CD8-positive, alpha-beta memory T cell (primary cell): ENCODE measurements at regions of chr3 and their contacts with region 1.

Region 1: GRCh38 chr3:149657926-149658733 is at the start of gene WWTR1:
- DNase-seq: peak in 4 of 5 donors; percentile 5 to 60 (median 10)
- H3K4me3 ChIP-seq: peak within 1 kb of the TSS; percentile 49
- H3K4me3 Mint-ChIP-seq: peak within 1 kb of the TSS; percentile 84 to 95 (median 87)
- H3K27ac ChIP-seq: no peak within 1 kb of the TSS
- H3K27ac Mint-ChIP-seq: peak within 1 kb of the TSS in 7 of 8 donors; percentile 36 to 95 (median 69)
- H3K4me1 ChIP-seq: no peaks in the 10 kb centered on the region
- H3K4me1 Mint-ChIP-seq: peaks cover 10 to 35% (median 29%) of the 10 kb centered on the region in 3 donors
- H3K27me3 ChIP-seq: peaks cover 10% of the 10 kb centered on the region
- H3K27me3 Mint-ChIP-seq: peaks cover 45 to 47% of the 10 kb centered on the region in 2 donors
- total RNA-seq, gene WWTR1: 0.98 to 1.9 TPM

Region 2: GRCh38 chr3:149571381-149571780 is 86.7 kb before region 1 on chr3:
- CTCF ChIA-PET with region 1: interaction called, 19 read pairs
- POLR2A ChIA-PET with region 1: no interaction called
- DNase-seq: no peak
- H3K4me3 ChIP-seq: no peak overlapping the region
- H3K4me3 Mint-ChIP-seq: no peak overlapping the region
- H3K27ac ChIP-seq: no peak overlapping the region
- H3K27ac Mint-ChIP-seq: no peak overlapping the region
- H3K4me1 ChIP-seq: no peaks in the 10 kb centered on the region
- H3K4me1 Mint-ChIP-seq: peaks cover 3 to 27% (median 14%) of the 10 kb centered on the region in 3 donors
- H3K27me3 ChIP-seq: no peaks in the 10 kb centered on the region
- H3K27me3 Mint-ChIP-seq: peaks cover 0 to 3% of the 10 kb centered on the region in 2 donors

Region 3: GRCh38 chr3:149670742-149671492 is 12.8 kb after region 1 on chr3:
- CTCF ChIA-PET with region 1: interaction called, 15 read pairs
- POLR2A ChIA-PET with region 1: no interaction called
- DNase-seq: no peak
- H3K4me3 ChIP-seq: no peak overlapping the region
- H3K4me3 Mint-ChIP-seq: peak overlapping the region in 1 of 7 donors; percentile 28
- H3K27ac ChIP-seq: no peak overlapping the region
- H3K27ac Mint-ChIP-seq: no peak overlapping the region
- H3K4me1 ChIP-seq: no peaks in the 10 kb centered on the region
- H3K4me1 Mint-ChIP-seq: peaks cover 0 to 6% (median 4%) of the 10 kb centered on the region in 3 donors
- H3K27me3 ChIP-seq: no peaks in the 10 kb centered on the region
- H3K27me3 Mint-ChIP-seq: peaks cover 18 to 23% of the 10 kb centered on the region in 2 donors